PC-9 (cell line): ENCODE measurements at regions of chr4 and their contacts with region 1.

Region 1: DNA sequence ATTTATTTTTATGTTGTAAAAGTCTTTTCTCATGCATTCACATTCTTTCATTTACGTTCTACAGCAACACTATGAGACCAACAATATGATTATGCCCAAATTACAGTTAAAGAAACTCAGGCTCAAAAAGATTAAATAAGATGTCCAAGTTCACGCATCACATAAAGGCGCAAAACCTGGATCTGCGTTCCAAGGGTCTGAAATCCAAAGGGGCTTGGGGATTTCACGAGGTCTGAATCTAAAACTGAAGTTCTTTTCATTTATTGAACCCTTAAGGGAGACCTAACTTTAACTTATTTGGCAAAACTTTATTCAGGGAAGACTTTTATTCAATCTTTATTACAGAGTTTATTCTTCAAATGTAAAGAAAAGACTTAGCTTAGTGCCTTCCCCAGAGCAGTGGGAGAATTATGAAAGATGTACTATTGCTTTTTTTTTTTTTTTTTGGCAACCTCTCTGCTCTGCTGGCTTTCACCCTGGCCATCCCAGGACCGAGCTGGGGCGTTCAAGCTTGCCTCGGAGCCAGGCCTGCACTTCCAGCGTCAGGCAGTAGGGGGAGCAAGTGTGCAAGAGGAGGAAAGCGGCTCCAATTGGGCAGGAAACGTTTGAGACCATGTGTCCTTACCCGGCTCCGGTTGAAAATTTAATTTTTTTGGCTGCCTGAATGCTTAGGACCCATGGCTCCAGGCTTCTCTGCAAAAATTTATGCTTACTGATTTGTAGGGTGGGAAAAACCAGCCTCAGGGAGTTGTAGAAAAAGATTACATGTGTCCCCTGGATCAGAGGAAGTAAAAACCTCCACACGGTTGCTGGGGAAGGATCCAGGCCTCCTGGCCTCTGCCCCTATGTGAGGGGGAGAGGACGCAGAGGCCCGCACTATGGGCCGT is 344.3 kb upstream of the KLF3 start:
- DNase-seq: peak; percentile 79 to 92
- H3K4me3 ChIP-seq: peak overlapping the region; percentile 10; the same call in 1 of the 2 replicates
- H3K27ac ChIP-seq: peak overlapping the region; percentile 76
- H3K4me1 ChIP-seq: peaks cover 27% of the 10 kb centered on the region
- H3K27me3 ChIP-seq: no peaks in the 10 kb centered on the region
- CTCF ChIP-seq: peak; percentile 98

Region 2: GRCh38 chr4:38062088-38062893 is 257.4 kb before region 1 on chr4:
- CTCF ChIA-PET with region 1: no interaction called
- POLR2A ChIA-PET with region 1: no interaction called
- intact Hi-C with region 1: loop called (anchors 2 kb)
- DNase-seq: peak; percentile 58 to 70
- H3K4me3 ChIP-seq: no peak overlapping the region
- H3K27ac ChIP-seq: no peak overlapping the region
- H3K4me1 ChIP-seq: peaks cover 19% of the 10 kb centered on the region
- H3K27me3 ChIP-seq: no peaks in the 10 kb centered on the region
- CTCF ChIP-seq: peak; percentile 90

Region 3: DNA sequence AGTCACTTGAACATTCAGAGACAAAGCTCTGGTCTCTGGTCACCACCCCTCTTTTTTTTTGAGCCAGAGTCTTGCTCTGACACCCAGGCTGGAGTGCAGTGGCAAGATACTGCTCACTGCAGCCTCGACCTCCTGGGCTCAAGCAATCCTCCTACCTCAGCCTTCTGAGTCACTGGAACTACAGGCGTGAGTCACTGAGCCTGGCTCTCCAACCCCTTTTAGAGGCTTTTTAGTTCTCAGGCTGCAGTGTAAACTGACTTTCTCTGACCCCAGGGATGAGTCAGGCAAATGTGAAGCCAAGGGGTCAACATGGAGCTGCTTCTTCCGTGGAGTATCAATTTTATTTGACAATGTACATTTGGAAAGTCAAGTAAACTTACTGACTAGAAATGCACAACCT is 130.3 kb before region 1 on chr4:
- CTCF ChIA-PET with region 1: interaction called, 3 read pairs
- POLR2A ChIA-PET with region 1: no interaction called
- intact Hi-C with region 1: loop called (anchors 1 kb)
- DNase-seq: peak; percentile 56 to 94
- H3K4me3 ChIP-seq: no peak overlapping the region; the same call in 1 of the 2 replicates
- H3K27ac ChIP-seq: peak overlapping the region; percentile 99
- H3K4me1 ChIP-seq: peaks cover 37% of the 10 kb centered on the region
- H3K27me3 ChIP-seq: no peaks in the 10 kb centered on the region
- CTCF ChIP-seq: no peak

Region 4: GRCh38 chr4:38371391-38371851 is 51.7 kb after region 1 on chr4:
- CTCF ChIA-PET with region 1: interaction called, 3 read pairs
- POLR2A ChIA-PET with region 1: no interaction called
- intact Hi-C with region 1: loop called (anchors 5 kb)
- DNase-seq: no peak
- H3K4me3 ChIP-seq: no peak overlapping the region
- H3K27ac ChIP-seq: no peak overlapping the region
- H3K4me1 ChIP-seq: no peaks in the 10 kb centered on the region; the same call in 1 of the 2 replicates
- H3K27me3 ChIP-seq: no peaks in the 10 kb centered on the region
- CTCF ChIP-seq: no peak

Region 5: GRCh38 chr4:38663801-38664705 is 344.4 kb after region 1 on chr4 and contains the start of gene KLF3:
- CTCF ChIA-PET with region 1: interaction called, 20 read pairs
- POLR2A ChIA-PET with region 1: interaction called, 10 read pairs
- intact Hi-C with region 1: no loop called
- DNase-seq: peak; percentile 59 to 92
- H3K4me3 ChIP-seq: peak within 1 kb of the TSS; percentile 72
- H3K27ac ChIP-seq: peak within 1 kb of the TSS; percentile 96
- H3K4me1 ChIP-seq: peaks cover 34% of the 10 kb centered on the region
- H3K27me3 ChIP-seq: no peaks in the 10 kb centered on the region
- CTCF ChIP-seq: no peak
- total RNA-seq, gene KLF3: 33.1 and 37.5 TPM in 2 replicates

Region 6: GRCh38 chr4:38791010-38791409 is 471.3 kb after region 1 on chr4:
- CTCF ChIA-PET with region 1: no interaction called
- POLR2A ChIA-PET with region 1: interaction called, 16 read pairs
- intact Hi-C with region 1: no loop called
- DNase-seq: no peak
- H3K4me3 ChIP-seq: no peak overlapping the region
- H3K27ac ChIP-seq: no peak overlapping the region
- H3K4me1 ChIP-seq: no peaks in the 10 kb centered on the region
- H3K27me3 ChIP-seq: no peaks in the 10 kb centered on the region
- CTCF ChIP-seq: no peak